ENCODE measurements at regions of chr11 and their contacts with region 1.

Region 1: GRCh38 chr11:66311965-66312548 is 4.8 kb downstream of the CD248 start:
- DNase-seq: peak; percentile 97
- H3K4me3 Mint-ChIP-seq: peak overlapping the region; percentile 85
- H3K27ac Mint-ChIP-seq: peak overlapping the region; percentile 90
- H3K4me1 Mint-ChIP-seq: peaks cover 16% of the 10 kb centered on the region
- H3K27me3 Mint-ChIP-seq: peaks cover 10% of the 10 kb centered on the region

Region 2: GRCh38 chr11:66282468-66283386 is 29.3 kb before region 1 on chr11:
- CTCF ChIA-PET with region 1: interaction called, 33 read pairs
- POLR2A ChIA-PET with region 1: interaction called, 28 read pairs
- DNase-seq: peak; percentile 99
- H3K4me3 Mint-ChIP-seq: no peak overlapping the region
- H3K27ac Mint-ChIP-seq: peak overlapping the region; percentile 58
- H3K4me1 Mint-ChIP-seq: peaks cover 43% of the 10 kb centered on the region
- H3K27me3 Mint-ChIP-seq: peaks cover 16% of the 10 kb centered on the region

Region 3: GRCh38 chr11:66299186-66299585 is 12.9 kb before region 1 on chr11:
- CTCF ChIA-PET with region 1: interaction called, 12 read pairs
- POLR2A ChIA-PET with region 1: no interaction called
- DNase-seq: no peak
- H3K4me3 Mint-ChIP-seq: no peak overlapping the region
- H3K27ac Mint-ChIP-seq: no peak overlapping the region
- H3K4me1 Mint-ChIP-seq: no peaks in the 10 kb centered on the region
- H3K27me3 Mint-ChIP-seq: peaks cover 3% of the 10 kb centered on the region

Region 4: DNA sequence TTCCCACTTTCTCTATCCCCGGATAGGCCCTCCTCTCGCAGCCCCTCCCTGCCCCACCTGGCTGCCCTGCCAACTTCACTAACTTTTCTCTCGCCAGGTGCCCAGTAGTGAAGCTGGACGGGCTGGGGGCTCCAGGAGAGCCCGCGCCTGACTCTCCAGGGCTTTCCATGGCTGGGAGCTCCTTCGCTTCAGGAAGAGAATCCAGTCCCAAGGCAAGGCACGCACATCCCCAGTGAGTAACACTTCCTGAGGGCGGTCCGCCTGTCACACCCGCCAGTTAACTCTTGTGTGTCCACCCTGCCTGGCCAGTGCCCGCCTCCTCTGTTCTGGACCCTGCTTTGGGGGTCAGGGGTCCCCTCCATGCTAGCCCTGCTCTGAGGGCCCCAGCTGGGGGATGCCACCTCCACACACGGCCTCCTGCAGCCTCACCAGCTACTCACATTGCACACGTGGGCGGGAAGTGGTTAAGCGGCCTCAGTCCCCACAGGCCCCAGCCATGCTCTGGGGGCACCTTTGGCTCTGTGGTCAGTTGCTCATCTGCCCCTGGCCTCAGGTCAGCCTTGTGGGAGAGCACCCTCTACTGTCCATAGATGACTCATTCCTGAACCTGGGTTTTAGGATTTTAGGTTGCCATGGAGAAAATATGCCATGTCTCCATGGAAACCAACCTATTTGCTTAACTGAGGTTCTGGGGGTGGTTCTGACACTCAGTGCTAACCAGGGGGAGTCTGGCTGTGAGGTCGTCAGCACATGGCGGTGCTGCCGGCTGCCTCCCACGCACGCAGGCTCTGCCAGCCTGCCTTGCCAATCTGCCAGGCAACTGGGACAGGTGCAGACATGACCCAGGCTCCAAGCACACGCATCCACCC is 24.4 kb after region 1 on chr11 and contains the start of gene RIN1:
- CTCF ChIA-PET with region 1: interaction called, 73 read pairs
- POLR2A ChIA-PET with region 1: interaction called, 19 read pairs
- DNase-seq: peak; percentile 70
- H3K4me3 Mint-ChIP-seq: no peak within 1 kb of the TSS
- H3K27ac Mint-ChIP-seq: peak within 1 kb of the TSS; percentile 21
- H3K4me1 Mint-ChIP-seq: peaks cover 25% of the 10 kb centered on the region
- H3K27me3 Mint-ChIP-seq: peaks cover 4% of the 10 kb centered on the region
- total RNA-seq, gene RIN1: 0.43 to 0.73 TPM

Region 5: GRCh38 chr11:66359662-66360087 is 47.6 kb after region 1 on chr11:
- CTCF ChIA-PET with region 1: no interaction called
- POLR2A ChIA-PET with region 1: no interaction called
- DNase-seq: no peak
- H3K4me3 Mint-ChIP-seq: no peak overlapping the region
- H3K27ac Mint-ChIP-seq: no peak overlapping the region
- H3K4me1 Mint-ChIP-seq: no peaks in the 10 kb centered on the region
- H3K27me3 Mint-ChIP-seq: no peaks in the 10 kb centered on the region

Region 6: GRCh38 chr11:66371627-66372415 is 59.8 kb after region 1 on chr11 and contains the start of gene SLC29A2:
- CTCF ChIA-PET with region 1: interaction called, 13 read pairs
- POLR2A ChIA-PET with region 1: interaction called, 6 read pairs
- DNase-seq: peak; percentile 79
- H3K4me3 Mint-ChIP-seq: peak within 1 kb of the TSS; percentile 80
- H3K27ac Mint-ChIP-seq: peak within 1 kb of the TSS; percentile 91
- H3K4me1 Mint-ChIP-seq: peaks cover 19% of the 10 kb centered on the region
- H3K27me3 Mint-ChIP-seq: peaks cover 7% of the 10 kb centered on the region
- total RNA-seq, gene SLC29A2: 8.4 to 9.0 TPM

Region 7: GRCh38 chr11:66616379-66617154 is 304.5 kb after region 1 on chr11 and contains the start of gene RBM14:
- CTCF ChIA-PET with region 1: no interaction called
- POLR2A ChIA-PET with region 1: interaction called, 10 read pairs
- DNase-seq: peak; percentile 98
- H3K4me3 Mint-ChIP-seq: peak within 1 kb of the TSS; percentile 97
- H3K27ac Mint-ChIP-seq: peak within 1 kb of the TSS; percentile 98
- H3K4me1 Mint-ChIP-seq: peaks cover 43% of the 10 kb centered on the region
- H3K27me3 Mint-ChIP-seq: no peaks in the 10 kb centered on the region
- total RNA-seq, gene RBM14: 116 to 120 TPM